CD4-positive, alpha-beta T cell (primary cell): ENCODE measurements at regions of chr1 and their contacts with region 1.

Region 1: GRCh38 chr1:5745776-5746610 is 246.2 kb downstream of the NPHP4 start:
- DNase-seq: peak; percentile 26 to 74 (median 40)
- ATAC-seq: peak; percentile 41
- H3K4me3 ChIP-seq: no peak overlapping the region
- H3K4me3 Mint-ChIP-seq: no peak overlapping the region
- H3K27ac ChIP-seq: no peak overlapping the region
- H3K27ac Mint-ChIP-seq: no peak overlapping the region
- H3K4me1 ChIP-seq: peaks cover 4% of the 10 kb centered on the region
- H3K4me1 Mint-ChIP-seq: no peaks in the 10 kb centered on the region
- H3K27me3 ChIP-seq: peaks cover 6 to 13% of the 10 kb centered on the region in 2 experiments
- H3K27me3 Mint-ChIP-seq: peaks cover 32% of the 10 kb centered on the region
- CTCF ChIP-seq: peak; percentile 74

Region 2: GRCh38 chr1:5639106-5639722 is 106.8 kb before region 1 on chr1:
- CTCF ChIA-PET with region 1: no interaction called
- POLR2A ChIA-PET with region 1: no interaction called
- intact Hi-C with region 1: loop called in 1 of 2 experiments (anchors 2 kb)
- DNase-seq: no peak
- ATAC-seq: no peak
- H3K4me3 ChIP-seq: no peak overlapping the region
- H3K4me3 Mint-ChIP-seq: no peak overlapping the region
- H3K27ac ChIP-seq: no peak overlapping the region
- H3K27ac Mint-ChIP-seq: no peak overlapping the region
- H3K4me1 ChIP-seq: no peaks in the 10 kb centered on the region
- H3K4me1 Mint-ChIP-seq: no peaks in the 10 kb centered on the region
- H3K27me3 ChIP-seq: peaks cover 4 to 23% of the 10 kb centered on the region in 2 experiments
- H3K27me3 Mint-ChIP-seq: peaks cover 50% of the 10 kb centered on the region
- CTCF ChIP-seq: no peak